Activated B cell treated with CpG ODN at 0.5 μM for 24 hours (primary cell): ENCODE measurements at regions of chr14 and their contacts with region 1.

Region 1: GRCh38 chr14:75138492-75138891 is 11.6 kb upstream of the NEK9 start:
- DNase-seq: no peak
- ATAC-seq: peak; percentile 72
- H3K4me3 Mint-ChIP-seq: peak overlapping the region; percentile 55
- H3K27ac Mint-ChIP-seq: peak overlapping the region; percentile 76
- H3K4me1 Mint-ChIP-seq: peaks cover 51% of the 10 kb centered on the region
- H3K27me3 Mint-ChIP-seq: no peaks in the 10 kb centered on the region
- CTCF ChIP-seq: no peak

Region 2: DNA sequence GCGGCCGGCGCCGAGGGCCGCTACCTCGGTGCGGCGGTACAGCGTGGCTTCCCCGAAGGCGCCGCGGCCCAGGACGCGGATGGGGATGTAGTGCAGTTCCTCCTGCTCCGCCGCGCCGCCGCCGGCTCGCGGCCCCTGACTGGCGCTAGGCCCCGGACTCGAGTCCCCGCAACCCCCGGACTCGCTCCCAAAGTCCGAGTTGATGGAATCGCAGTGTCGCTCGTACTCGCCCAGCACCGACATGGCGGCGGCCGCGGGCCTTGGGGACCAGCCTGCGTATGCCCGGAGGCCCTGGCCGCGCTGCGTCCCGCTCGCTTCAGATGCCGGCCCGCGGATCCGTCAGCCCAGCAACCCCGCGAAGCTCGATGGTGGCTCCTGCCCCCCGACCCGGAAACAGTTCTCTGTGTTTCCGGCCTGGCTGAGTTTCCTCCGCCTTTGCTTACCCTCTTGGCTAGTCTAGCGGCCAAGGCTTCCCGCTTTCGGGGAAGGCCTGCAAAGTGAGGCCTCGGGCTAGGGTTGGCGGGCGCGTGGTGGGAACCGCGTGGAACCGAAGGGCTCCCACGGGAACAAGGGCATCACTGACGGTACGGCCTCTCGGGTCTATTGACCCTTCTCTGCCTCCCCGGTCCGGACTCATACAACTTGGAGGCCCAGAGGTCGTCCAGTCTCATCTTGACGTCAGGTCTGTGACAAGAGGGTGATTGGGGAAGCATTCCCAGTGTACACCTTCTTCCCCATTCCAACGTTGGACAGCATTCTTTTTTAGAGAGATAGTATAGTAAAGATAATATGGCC is 11.6 kb before region 1 on chr14 and contains the start of gene NEK9:
- CTCF ChIA-PET with region 1: interaction called, 5 read pairs
- POLR2A ChIA-PET with region 1: interaction called, 23 read pairs
- intact Hi-C with region 1: no loop called
- DNase-seq: peak; percentile 86
- ATAC-seq: peak; percentile 88
- H3K4me3 Mint-ChIP-seq: peak within 1 kb of the TSS; percentile 96
- H3K27ac Mint-ChIP-seq: peak within 1 kb of the TSS; percentile 94
- H3K4me1 Mint-ChIP-seq: peaks cover 38% of the 10 kb centered on the region
- H3K27me3 Mint-ChIP-seq: no peaks in the 10 kb centered on the region
- CTCF ChIP-seq: no peak
- total RNA-seq, gene NEK9: 96.1 and 97.7 TPM in 2 replicates